ENCODE measurements at regions of chr1 and their contacts with region 1.

Region 1: GRCh38 chr1:39258146-39258924 is 53.8 kb downstream of the MACF1 start:
- DNase-seq: peak; percentile 50 to 83 (median 71)
- ATAC-seq: peak; percentile 77 to 83
- H3K4me3 ChIP-seq: no peak overlapping the region
- H3K27ac ChIP-seq: peak overlapping the region; percentile 64
- H3K4me1 ChIP-seq: no peaks in the 10 kb centered on the region
- H3K27me3 ChIP-seq: no peaks in the 10 kb centered on the region

Region 2: GRCh38 chr1:39098546-39099250 is 159.6 kb before region 1 on chr1:
- intact Hi-C with region 1: loop called in 2 of 4 experiments (anchors 2 to 10 kb)
- DNase-seq: peak; percentile 63 to 75 (median 67)
- ATAC-seq: peak; percentile 67 to 70
- H3K4me3 ChIP-seq: no peak overlapping the region
- H3K27ac ChIP-seq: no peak overlapping the region
- H3K4me1 ChIP-seq: no peaks in the 10 kb centered on the region
- H3K27me3 ChIP-seq: no peaks in the 10 kb centered on the region

Region 3: DNA sequence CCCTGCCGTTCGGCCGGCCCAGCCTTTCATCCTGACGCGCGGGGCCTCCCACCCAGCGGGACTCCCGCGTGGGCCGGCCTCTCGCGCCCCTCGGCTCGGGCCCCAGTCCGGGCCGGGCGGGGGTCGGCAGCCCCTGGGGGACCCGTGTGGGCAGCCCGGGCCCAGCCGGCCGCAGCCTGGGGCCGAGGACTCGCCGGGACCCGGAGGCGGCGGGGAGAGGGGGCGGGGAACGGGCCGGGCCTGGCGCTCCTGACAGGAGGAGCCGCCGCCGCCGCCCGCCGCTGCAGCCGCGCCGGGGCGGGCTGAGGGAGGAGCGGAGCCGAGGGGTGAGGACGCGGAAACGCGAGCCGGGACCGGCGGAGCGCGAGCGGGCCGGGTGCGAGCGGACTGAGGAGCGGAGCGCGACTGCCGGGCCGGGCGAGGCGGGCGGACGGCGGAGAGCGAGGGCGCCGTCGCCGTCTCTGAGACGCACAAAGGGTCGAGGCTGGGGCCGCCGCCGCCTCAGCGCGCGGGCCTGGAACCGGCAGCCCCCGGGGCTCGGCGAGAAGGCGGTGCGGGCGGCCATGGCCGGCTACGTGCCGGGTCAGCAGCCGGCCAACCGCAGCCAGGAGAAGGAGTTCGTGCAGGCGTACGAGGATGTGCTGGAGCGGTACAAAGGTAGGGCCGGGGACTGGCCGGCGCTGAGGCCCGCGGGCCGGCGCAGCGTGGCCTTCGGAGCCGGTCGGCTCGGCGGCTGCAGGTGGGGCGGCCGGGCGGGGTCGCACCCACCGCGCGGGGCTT is 153.1 kb before region 1 on chr1:
- intact Hi-C with region 1: loop called in 2 of 4 experiments (anchors 5 to 10 kb)
- DNase-seq: peak; percentile 80 to 92 (median 91)
- ATAC-seq: peak; percentile 75 to 88
- H3K4me3 ChIP-seq: peak overlapping the region; percentile 65
- H3K27ac ChIP-seq: peak overlapping the region; percentile 86
- H3K4me1 ChIP-seq: peaks cover 9% of the 10 kb centered on the region
- H3K27me3 ChIP-seq: no peaks in the 10 kb centered on the region

Region 4: DNA sequence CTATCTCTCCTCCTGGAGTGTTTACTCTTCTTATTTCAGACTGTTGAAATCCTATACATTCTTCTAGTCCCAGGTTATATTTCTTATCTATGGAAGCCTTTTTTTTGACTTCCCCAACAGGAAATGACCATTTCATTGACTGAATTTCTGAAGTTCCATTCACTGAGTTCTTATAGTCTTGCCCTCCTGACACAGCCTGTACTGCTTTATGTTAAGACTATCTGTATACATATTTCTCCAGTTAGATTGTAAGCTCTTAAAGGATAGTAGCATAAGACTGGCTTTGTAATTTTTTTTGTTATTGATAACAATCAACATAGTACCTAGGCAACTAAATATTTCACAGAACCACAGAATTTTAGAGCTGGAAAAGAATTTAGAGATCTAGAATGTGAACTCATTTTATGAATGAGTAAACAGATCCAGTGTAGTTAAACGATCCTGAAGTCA is 68.7 kb before region 1 on chr1:
- intact Hi-C with region 1: loop called in 2 of 4 experiments (anchors 5 kb)
- DNase-seq: no peak
- ATAC-seq: no peak
- H3K4me3 ChIP-seq: no peak overlapping the region
- H3K27ac ChIP-seq: no peak overlapping the region
- H3K4me1 ChIP-seq: no peaks in the 10 kb centered on the region
- H3K27me3 ChIP-seq: no peaks in the 10 kb centered on the region

Region 5: GRCh38 chr1:39196244-39197215 is 61.8 kb before region 1 on chr1:
- intact Hi-C with region 1: loop called (anchors 5 kb)
- DNase-seq: no peak
- ATAC-seq: peak in 1 of 2 donors; percentile 20
- H3K4me3 ChIP-seq: no peak overlapping the region
- H3K27ac ChIP-seq: no peak overlapping the region
- H3K4me1 ChIP-seq: peaks cover 2% of the 10 kb centered on the region
- H3K27me3 ChIP-seq: no peaks in the 10 kb centered on the region

Region 6: DNA sequence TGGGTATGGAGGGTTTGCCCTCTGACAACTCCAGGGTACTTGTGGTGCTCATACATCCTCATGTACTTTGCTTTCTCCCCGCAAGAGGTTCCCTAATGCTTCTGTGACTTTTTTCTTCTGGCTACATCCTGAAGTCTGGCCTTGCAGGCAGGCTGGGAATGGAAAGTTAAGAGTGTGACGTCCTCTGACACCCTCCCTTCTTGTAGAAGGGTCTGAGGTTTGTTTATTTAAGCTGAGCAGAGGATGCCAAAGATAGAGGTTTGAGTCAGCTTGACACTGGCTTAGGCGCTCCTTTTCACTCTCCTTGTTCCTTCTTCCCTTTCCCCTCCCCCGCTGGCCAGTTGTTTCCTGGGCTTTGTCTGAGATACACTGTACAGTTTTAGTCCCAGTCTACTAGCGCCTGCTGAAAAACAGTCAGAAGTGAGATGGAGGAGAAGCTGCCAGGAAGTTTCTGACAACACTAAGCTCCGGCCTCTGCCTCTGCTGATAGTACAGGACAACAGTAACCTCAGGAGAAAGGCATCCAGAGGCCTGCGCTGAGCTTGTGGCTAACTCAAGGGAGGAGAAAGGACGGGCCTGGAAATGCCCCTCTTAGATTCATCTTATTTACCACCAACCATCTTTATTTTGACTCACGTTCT is 53.8 kb before region 1 on chr1 and contains the start of gene MACF1:
- intact Hi-C with region 1: loop called in 3 of 4 experiments (anchors 5 kb)
- DNase-seq: peak; percentile 76 to 85 (median 81)
- ATAC-seq: peak; percentile 93 to 95
- H3K4me3 ChIP-seq: peak within 1 kb of the TSS; percentile 80
- H3K27ac ChIP-seq: peak within 1 kb of the TSS; percentile 98
- H3K4me1 ChIP-seq: peaks cover 6% of the 10 kb centered on the region
- H3K27me3 ChIP-seq: no peaks in the 10 kb centered on the region
- total RNA-seq, gene MACF1: 294 to 359 (median 326) TPM

Region 7: DNA sequence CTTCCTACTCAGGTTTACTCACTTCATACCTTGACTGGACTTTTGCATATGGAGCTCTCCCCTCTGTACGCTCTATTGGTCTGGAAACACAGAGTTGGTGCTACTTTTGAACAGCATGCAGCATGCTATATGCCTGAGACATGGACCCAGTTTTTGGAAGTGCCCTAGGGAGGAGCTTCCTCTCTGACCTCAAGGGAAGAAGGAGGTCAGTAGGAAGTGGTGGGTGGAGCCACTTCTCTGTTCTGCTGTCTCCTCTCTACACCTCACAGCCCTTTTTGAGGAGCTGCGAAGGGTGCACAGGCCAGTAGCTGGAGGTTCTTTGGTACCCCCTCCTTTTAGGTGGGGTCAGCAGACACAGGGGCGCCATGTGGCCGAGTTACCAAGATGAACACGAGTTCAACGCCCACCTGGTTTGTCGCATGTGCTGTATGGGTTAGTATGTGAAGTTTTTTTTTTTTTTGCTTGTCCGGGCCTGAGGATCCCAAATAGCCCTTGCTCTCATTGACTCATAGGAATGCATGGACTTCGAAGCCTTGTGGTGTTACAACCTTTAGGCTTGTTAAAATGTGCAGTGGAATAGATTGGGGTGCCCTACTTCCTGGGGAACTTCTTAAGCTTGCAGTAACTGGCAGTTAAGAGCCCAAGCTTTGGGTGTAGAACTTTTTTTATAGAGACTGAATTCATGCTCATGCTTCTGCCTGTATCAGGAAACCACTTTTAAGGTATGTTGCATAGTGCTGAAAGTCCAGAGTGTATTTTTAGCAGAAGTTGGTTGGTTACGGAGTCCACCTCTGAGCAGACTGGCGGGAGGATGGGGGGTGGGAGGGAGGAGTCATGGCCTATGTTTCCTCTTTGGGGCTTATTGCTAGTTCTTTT is 43.1 kb before region 1 on chr1:
- intact Hi-C with region 1: no loop called
- DNase-seq: no peak
- ATAC-seq: peak; percentile 53 to 64
- H3K4me3 ChIP-seq: peak overlapping the region; percentile 33
- H3K27ac ChIP-seq: peak overlapping the region; percentile 88
- H3K4me1 ChIP-seq: peaks cover 20% of the 10 kb centered on the region
- H3K27me3 ChIP-seq: no peaks in the 10 kb centered on the region